ENCODE measurements at regions of chr6 and their contacts with region 1.

Region 1: GRCh38 chr6:134174672-134175198 is 122.3 kb upstream of the SLC2A12 start:
- DNase-seq: peak; percentile 96
- H3K4me3 ChIP-seq: peak overlapping the region; percentile 33 to 90 (median 75)
- H3K27ac ChIP-seq: peak overlapping the region; percentile 94 to 95 (median 94)
- H3K4me1 ChIP-seq: peaks cover 0 to 30% (median 12%) of the 10 kb centered on the region in 4 donors
- H3K27me3 ChIP-seq: no peaks in the 10 kb centered on the region
- CTCF ChIP-seq: no peak
- EP300 ChIP-seq: no peak
- POLR2A ChIP-seq: peak; percentile 99

Region 2: GRCh38 chr6:134640975-134641429 is 466.3 kb after region 1 on chr6:
- in situ Hi-C with region 1: loop called (anchors 5 to 25 kb)
- intact Hi-C with region 1: loop called (anchors 10 kb)
- DNase-seq: peak; percentile 84
- H3K4me3 ChIP-seq: no peak overlapping the region
- H3K27ac ChIP-seq: peak overlapping the region in 2 of 4 donors; percentile 24 to 38
- H3K4me1 ChIP-seq: peaks cover 0 to 40% (median 10%) of the 10 kb centered on the region in 4 donors
- H3K27me3 ChIP-seq: no peaks in the 10 kb centered on the region
- CTCF ChIP-seq: peak; percentile 84 to 98 (median 89)
- EP300 ChIP-seq: no peak
- POLR2A ChIP-seq: no peak

Region 3: DNA sequence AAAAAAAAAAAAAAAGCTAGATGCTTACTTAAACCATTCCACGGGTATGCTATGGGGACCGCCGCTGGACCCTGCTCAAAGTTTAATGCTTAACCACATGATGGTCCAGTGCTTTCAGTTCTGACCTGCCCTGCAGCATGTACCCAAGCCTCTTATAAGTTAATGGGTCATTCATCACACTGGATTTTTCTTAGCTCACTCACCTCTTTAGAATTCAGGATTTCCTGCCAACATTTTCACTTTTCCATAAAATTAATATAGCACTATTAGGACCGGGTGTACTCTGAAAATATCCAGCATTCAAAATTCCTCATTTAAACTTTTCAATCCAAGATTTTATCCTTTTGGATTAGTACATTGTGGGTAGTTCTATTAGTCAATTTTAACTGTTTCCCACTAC is 634.4 kb after region 1 on chr6:
- in situ Hi-C with region 1: loop called in 1 of 4 experiments (anchors 10 kb)
- intact Hi-C with region 1: no loop called
- DNase-seq: no peak
- H3K4me3 ChIP-seq: no peak overlapping the region
- H3K27ac ChIP-seq: no peak overlapping the region
- H3K4me1 ChIP-seq: no peaks in the 10 kb centered on the region
- H3K27me3 ChIP-seq: no peaks in the 10 kb centered on the region
- CTCF ChIP-seq: no peak
- EP300 ChIP-seq: no peak
- POLR2A ChIP-seq: no peak

Region 4: DNA sequence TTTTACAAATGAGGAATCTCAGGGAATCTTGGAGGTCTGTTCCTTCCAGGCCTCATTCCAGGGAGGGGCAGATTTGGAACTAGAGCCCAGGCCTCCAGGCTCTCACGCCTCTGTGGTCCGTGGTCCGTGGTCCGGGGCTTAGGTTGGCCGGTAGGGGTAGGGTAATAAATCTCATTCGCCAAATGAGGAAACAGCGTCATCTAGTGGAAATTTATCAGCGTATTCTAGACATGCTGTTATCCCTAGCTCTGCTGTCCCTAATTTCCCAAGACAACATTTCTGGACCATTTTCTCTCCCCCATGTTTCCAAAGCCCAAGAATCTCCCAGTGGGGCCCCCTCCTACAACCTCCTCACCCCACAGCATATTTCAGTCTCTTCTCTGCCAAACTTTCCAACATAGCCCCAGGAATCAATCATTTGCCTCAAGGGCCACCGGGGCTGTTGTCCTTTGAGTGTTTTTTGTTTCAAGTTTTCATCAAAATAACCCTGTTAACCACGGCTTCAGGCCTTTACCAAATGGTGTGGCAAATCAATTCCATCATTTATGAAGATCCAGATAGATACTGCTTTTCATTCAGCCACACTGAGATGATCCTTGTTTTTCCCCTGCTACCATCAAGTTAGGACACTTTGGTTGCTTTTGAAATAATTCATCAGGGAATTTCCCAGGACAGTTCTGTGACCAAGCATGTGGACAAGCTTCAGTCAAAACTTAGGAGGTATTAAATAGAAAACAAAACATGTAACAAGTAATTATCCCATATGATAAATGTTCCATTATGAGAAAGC is 648.4 kb after region 1 on chr6:
- in situ Hi-C with region 1: loop called in 2 of 4 experiments (anchors 10 to 25 kb)
- intact Hi-C with region 1: no loop called
- DNase-seq: peak; percentile 32
- H3K4me3 ChIP-seq: no peak overlapping the region
- H3K27ac ChIP-seq: peak overlapping the region in 1 of 4 donors; percentile 0
- H3K4me1 ChIP-seq: peaks cover 0 to 10% (median 1%) of the 10 kb centered on the region in 4 donors
- H3K27me3 ChIP-seq: no peaks in the 10 kb centered on the region
- CTCF ChIP-seq: peak; percentile 70 to 96 (median 84)
- EP300 ChIP-seq: no peak
- POLR2A ChIP-seq: no peak

Region 5: GRCh38 chr6:134882426-134883038 is 707.8 kb after region 1 on chr6:
- in situ Hi-C with region 1: loop called in 2 of 4 experiments (anchors 5 to 25 kb)
- intact Hi-C with region 1: loop called (anchors 5 kb)
- DNase-seq: peak; percentile 78
- H3K4me3 ChIP-seq: no peak overlapping the region
- H3K27ac ChIP-seq: no peak overlapping the region
- H3K4me1 ChIP-seq: peaks cover 0 to 7% (median 0%) of the 10 kb centered on the region in 4 donors
- H3K27me3 ChIP-seq: no peaks in the 10 kb centered on the region
- CTCF ChIP-seq: peak; percentile 90 to 97 (median 96)
- EP300 ChIP-seq: no peak
- POLR2A ChIP-seq: no peak

Region 6: GRCh38 chr6:134938896-134939295 is 764.2 kb after region 1 on chr6:
- in situ Hi-C with region 1: loop called in 1 of 4 experiments (anchors 25 kb)
- intact Hi-C with region 1: no loop called
- DNase-seq: no peak
- H3K4me3 ChIP-seq: no peak overlapping the region
- H3K27ac ChIP-seq: no peak overlapping the region
- H3K4me1 ChIP-seq: no peaks in the 10 kb centered on the region
- H3K27me3 ChIP-seq: no peaks in the 10 kb centered on the region
- CTCF ChIP-seq: no peak
- EP300 ChIP-seq: no peak
- POLR2A ChIP-seq: no peak